ENCODE measurements at regions of chr22 and their contacts with region 1.

Region 1: DNA sequence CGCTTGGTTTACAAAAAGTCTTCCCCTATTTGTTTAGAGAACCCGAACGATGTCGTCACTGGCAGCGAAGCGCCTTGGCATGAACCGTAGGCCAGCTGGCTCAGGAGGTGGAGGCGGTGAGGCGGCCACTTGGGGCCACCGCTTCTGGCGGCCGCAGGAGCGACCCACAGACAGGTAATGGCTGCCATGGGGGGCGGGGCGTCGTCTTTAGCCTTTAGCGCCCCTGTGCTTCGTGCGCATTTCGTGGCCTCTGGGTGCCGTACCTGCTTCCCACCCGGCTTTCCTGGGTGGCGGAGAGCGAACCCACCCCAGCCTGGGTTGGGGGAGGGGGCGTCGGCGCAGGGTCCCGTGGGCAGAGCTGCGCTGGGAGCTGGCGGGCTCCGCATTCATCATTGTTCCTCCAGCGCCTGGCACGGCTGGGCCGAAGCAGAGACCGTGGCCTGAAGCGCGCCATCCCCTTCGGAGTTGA is 469 bp upstream of the OSBP2 start:
- DNase-seq: peak; percentile 85
- H3K4me3 Mint-ChIP-seq: peak overlapping the region; percentile 85
- H3K27ac Mint-ChIP-seq: peak overlapping the region; percentile 71
- H3K4me1 Mint-ChIP-seq: peaks cover 12% of the 10 kb centered on the region
- H3K27me3 Mint-ChIP-seq: peaks cover 24% of the 10 kb centered on the region

Region 2: GRCh38 chr22:30754971-30755756 is 61.0 kb after region 1 on chr22:
- intact Hi-C with region 1: loop called (anchors 5 kb)
- DNase-seq: peak; percentile 88
- H3K4me3 Mint-ChIP-seq: no peak overlapping the region
- H3K27ac Mint-ChIP-seq: no peak overlapping the region
- H3K4me1 Mint-ChIP-seq: peaks cover 2% of the 10 kb centered on the region
- H3K27me3 Mint-ChIP-seq: no peaks in the 10 kb centered on the region